ENCODE measurements at regions of chr6 and their contacts with region 1.

Region 1: DNA sequence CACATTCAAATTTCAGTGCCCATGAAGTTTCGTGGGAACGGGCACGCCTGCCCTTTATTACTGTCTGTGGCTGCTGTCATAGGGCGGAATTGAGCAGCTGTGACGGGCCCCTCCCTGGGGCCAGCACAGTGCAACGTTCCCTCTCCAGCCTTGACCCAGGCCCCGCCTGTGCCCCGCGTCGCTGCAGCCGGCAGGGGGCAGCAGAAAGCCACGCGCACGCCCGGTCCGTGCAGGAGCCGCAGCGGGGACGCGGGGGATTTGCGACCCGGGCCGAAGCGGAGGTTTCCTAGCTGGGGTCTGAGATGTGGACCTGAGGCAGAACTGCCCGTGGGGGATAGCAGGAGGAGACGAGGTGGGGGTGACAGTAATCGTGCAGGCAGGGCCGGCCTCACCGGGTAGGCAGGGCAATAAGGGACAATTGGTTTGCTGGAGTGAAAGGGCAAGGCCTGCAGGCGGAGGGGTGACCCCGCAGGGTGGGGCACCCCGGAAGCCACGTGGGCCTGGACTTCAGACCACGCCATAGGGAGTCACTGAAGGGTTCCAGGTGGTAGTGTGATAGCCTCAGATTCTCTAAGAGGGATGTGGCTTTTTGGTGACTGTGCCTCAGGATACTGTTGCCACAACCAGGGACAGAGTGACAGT is 54.4 kb downstream of the SYTL3 start:
- DNase-seq: peak; percentile 67
- H3K4me3 ChIP-seq: peak overlapping the region; percentile 12 to 30
- H3K27ac ChIP-seq: peak overlapping the region; percentile 30 to 46
- H3K4me1 ChIP-seq: peaks cover 16% of the 10 kb centered on the region
- H3K27me3 ChIP-seq: no peaks in the 10 kb centered on the region
- CTCF ChIP-seq: peak; percentile 97 to 99 (median 98)
- POLR2A ChIP-seq: no peak

Region 2: GRCh38 chr6:158762787-158763433 is 58.6 kb after region 1 on chr6:
- intact Hi-C with region 1: loop called (anchors 5 kb)
- DNase-seq: no peak
- H3K4me3 ChIP-seq: no peak overlapping the region
- H3K27ac ChIP-seq: no peak overlapping the region
- H3K4me1 ChIP-seq: no peaks in the 10 kb centered on the region
- H3K27me3 ChIP-seq: no peaks in the 10 kb centered on the region
- CTCF ChIP-seq: no peak
- POLR2A ChIP-seq: no peak

Region 3: GRCh38 chr6:158808941-158809678 is 104.8 kb after region 1 on chr6:
- intact Hi-C with region 1: loop called (anchors 2 kb)
- DNase-seq: no peak
- H3K4me3 ChIP-seq: no peak overlapping the region
- H3K27ac ChIP-seq: peak overlapping the region; percentile 64 to 65
- H3K4me1 ChIP-seq: peaks cover 37% of the 10 kb centered on the region
- H3K27me3 ChIP-seq: no peaks in the 10 kb centered on the region
- CTCF ChIP-seq: no peak
- POLR2A ChIP-seq: no peak

Region 4: DNA sequence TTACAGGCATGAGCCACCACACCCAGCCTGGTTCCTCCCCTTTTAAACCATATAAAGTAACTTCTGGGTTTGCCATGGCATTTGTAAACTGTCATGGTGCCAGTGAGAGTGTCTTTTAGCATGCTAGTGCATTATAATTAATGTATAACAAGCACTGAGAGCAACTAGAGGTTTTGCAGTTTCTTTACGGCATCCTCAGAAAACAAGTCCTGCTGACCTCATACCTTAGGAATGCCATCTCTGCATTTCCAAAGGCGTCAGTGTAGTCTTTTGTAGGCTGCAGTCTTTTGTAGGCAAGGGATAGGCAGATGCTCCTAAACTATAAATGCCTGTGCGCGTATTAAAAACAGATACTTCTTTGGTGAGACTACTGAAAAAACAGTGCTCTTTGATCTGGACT is 189.9 kb after region 1 on chr6:
- intact Hi-C with region 1: no loop called
- DNase-seq: no peak
- H3K4me3 ChIP-seq: no peak overlapping the region
- H3K27ac ChIP-seq: no peak overlapping the region
- H3K4me1 ChIP-seq: no peaks in the 10 kb centered on the region
- H3K27me3 ChIP-seq: no peaks in the 10 kb centered on the region
- CTCF ChIP-seq: no peak
- POLR2A ChIP-seq: no peak

Region 5: DNA sequence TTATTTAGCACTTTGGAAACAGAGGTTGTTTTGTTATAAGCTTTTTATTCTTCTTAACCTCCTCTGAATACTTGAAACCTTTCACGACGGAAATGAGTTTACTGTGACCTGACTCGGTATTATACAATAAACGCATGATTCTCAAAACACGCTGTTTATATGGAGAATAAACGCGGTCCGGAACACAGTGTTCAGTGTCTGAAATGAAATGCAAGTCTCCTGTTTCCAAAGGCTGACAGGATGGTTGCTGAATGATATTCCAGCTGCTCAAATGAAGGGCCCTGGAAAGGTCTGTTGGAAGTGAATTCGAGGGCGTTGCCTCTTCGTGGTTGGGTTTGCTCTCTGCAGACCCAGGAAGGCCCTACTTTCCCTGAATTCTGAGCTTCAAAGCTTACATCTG is 212.3 kb after region 1 on chr6:
- intact Hi-C with region 1: loop called (anchors 5 kb)
- DNase-seq: no peak
- H3K4me3 ChIP-seq: no peak overlapping the region
- H3K27ac ChIP-seq: peak overlapping the region; percentile 55 to 60
- H3K4me1 ChIP-seq: no peaks in the 10 kb centered on the region
- H3K27me3 ChIP-seq: no peaks in the 10 kb centered on the region
- CTCF ChIP-seq: no peak
- POLR2A ChIP-seq: no peak

Region 6: GRCh38 chr6:158972241-158973233 is 268.2 kb after region 1 on chr6:
- intact Hi-C with region 1: loop called (anchors 1 kb)
- DNase-seq: peak; percentile 15
- H3K4me3 ChIP-seq: no peak overlapping the region
- H3K27ac ChIP-seq: no peak overlapping the region
- H3K4me1 ChIP-seq: no peaks in the 10 kb centered on the region
- H3K27me3 ChIP-seq: no peaks in the 10 kb centered on the region
- CTCF ChIP-seq: peak; percentile 23 to 86 (median 72)
- POLR2A ChIP-seq: no peak

Region 7: GRCh38 chr6:159104163-159104925 is 400.0 kb after region 1 on chr6:
- intact Hi-C with region 1: loop called (anchors 10 kb)
- DNase-seq: peak; percentile 32
- H3K4me3 ChIP-seq: no peak overlapping the region
- H3K27ac ChIP-seq: no peak overlapping the region
- H3K4me1 ChIP-seq: no peaks in the 10 kb centered on the region
- H3K27me3 ChIP-seq: no peaks in the 10 kb centered on the region
- CTCF ChIP-seq: peak; percentile 44 to 77 (median 72)
- POLR2A ChIP-seq: no peak